ENCODE measurements at regions of chr17 and their contacts with region 1.

Region 1: DNA sequence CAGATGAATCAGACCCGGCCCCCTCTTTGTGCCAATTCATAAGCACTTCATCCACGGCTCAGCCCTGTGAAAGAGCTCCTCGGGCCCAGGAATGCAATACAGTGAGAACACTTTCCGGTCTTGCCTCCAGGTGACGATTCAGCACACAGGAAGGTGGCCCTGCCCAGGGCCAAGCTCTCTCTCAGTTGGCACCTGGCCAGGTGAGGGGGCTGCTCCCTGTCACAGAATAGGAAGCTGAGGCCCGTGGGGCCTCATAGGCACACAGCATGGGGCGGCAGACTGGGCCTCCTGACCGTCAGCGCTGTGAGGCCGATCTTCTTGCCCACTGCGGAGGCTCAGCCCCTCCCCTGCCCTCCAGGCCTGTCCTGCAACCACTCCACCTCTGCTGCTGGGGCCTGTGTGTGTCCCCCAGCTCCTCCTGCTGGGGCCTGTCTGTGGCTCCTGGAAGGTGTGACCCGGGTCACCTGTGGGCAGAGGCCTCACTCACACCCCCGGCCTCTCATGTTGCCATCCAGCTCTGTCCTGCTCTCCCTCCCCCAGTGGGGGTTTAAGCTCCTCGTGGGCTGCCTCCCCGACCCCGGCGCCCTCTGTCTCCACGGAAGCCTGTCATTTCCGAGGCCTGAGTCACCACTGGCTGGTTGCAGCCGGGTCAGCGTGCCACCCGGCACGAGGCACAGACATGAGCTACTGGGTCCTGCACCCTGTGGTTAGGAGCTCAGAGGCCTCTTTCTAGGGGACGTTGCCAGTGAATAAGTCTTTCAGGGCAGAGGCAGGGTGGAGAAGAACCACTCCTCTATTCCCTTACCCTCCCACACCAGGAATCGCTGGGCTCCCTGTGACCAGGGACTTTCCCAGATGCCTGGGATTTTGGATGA is 114.4 kb downstream of the SEC14L1 start:
- DNase-seq: peak; percentile 99
- ATAC-seq: peak; percentile 81
- H3K4me3 ChIP-seq: peak overlapping the region; percentile 0; the same call in 1 of the 2 replicates
- H3K27ac ChIP-seq: peak overlapping the region; percentile 90
- H3K4me1 ChIP-seq: peaks cover 35% of the 10 kb centered on the region
- H3K27me3 ChIP-seq: no peaks in the 10 kb centered on the region
- CTCF ChIP-seq: no peak

Region 2: GRCh38 chr17:77027271-77027670 is 227.9 kb before region 1 on chr17:
- CTCF ChIA-PET with region 1: no interaction called
- POLR2A ChIA-PET with region 1: no interaction called
- intact Hi-C with region 1: no loop called
- DNase-seq: no peak
- ATAC-seq: no peak
- H3K4me3 ChIP-seq: no peak overlapping the region
- H3K27ac ChIP-seq: no peak overlapping the region
- H3K4me1 ChIP-seq: no peaks in the 10 kb centered on the region
- H3K27me3 ChIP-seq: peaks cover 23% of the 10 kb centered on the region; the same call in 1 of the 2 replicates
- CTCF ChIP-seq: no peak

Region 3: GRCh38 chr17:77322514-77323412 is 67.6 kb after region 1 on chr17:
- CTCF ChIA-PET with region 1: interaction called, 6 read pairs
- POLR2A ChIA-PET with region 1: interaction called, 12 read pairs
- intact Hi-C with region 1: no loop called
- DNase-seq: peak; percentile 99
- ATAC-seq: peak; percentile 76
- H3K4me3 ChIP-seq: peak overlapping the region; percentile 54
- H3K27ac ChIP-seq: peak overlapping the region; percentile 98
- H3K4me1 ChIP-seq: peaks cover 70% of the 10 kb centered on the region
- H3K27me3 ChIP-seq: no peaks in the 10 kb centered on the region
- CTCF ChIP-seq: no peak

Measured in PC-3 (cell line).